Activated CD4-positive, alpha-beta T cell treated with anti-CD3 and anti-CD28 coated beads for 36 hours (primary cell): ENCODE measurements at regions of chr22 and their contacts with region 1.

Region 1: DNA sequence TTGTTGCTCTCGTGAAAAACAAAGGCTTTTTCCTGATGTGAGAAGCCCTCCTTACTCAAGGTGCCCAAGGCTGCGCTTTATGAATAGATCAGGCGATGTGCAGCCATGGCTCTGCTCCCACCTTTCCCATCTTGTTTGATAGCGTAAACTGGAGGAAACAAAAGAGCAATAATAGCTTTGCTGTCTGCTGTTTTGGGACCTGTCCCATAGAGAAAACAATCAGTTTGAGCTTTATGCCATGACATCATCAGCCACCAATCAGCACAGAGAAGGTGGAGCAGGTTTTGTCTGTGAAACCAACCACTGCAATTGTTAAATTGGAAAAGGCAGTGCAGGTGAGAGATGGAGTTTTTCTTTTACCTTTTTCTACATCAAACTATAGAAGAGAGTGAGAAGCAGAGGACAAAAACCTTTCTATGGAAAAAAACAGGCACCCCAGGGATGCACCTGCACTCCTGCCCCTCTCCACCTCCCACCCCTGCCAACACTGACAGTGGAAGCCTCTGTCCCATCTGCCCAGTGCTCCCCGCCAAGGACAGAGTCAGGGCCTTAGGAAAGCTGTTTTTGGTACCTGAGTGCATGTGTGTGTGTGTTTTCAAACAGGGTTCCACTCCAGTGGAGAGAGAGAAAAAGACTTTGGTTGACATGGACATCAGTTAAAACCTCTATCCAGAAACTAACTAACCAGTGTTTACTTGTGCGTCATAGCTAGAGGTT is 80.7 kb downstream of the MICAL3 start:
- DNase-seq: no peak
- ATAC-seq: no peak
- H3K4me3 Mint-ChIP-seq: no peak overlapping the region
- H3K27ac Mint-ChIP-seq: no peak overlapping the region
- H3K4me1 Mint-ChIP-seq: no peaks in the 10 kb centered on the region
- H3K27me3 Mint-ChIP-seq: no peaks in the 10 kb centered on the region

Region 2: GRCh38 chr22:17734187-17734586 is 209.5 kb before region 1 on chr22:
- CTCF ChIA-PET with region 1: no interaction called
- POLR2A ChIA-PET with region 1: interaction called, 10 read pairs
- intact Hi-C with region 1: no loop called
- DNase-seq: peak; percentile 60
- ATAC-seq: peak; percentile 95
- H3K4me3 Mint-ChIP-seq: no peak overlapping the region
- H3K27ac Mint-ChIP-seq: peak overlapping the region; percentile 86
- H3K4me1 Mint-ChIP-seq: peaks cover 15% of the 10 kb centered on the region
- H3K27me3 Mint-ChIP-seq: no peaks in the 10 kb centered on the region